ENCODE measurements at regions of chr12 and their contacts with region 1.

Region 1: GRCh38 chr12:98424726-98425401 is 90.5 kb upstream of the TMPO start:
- DNase-seq: peak; percentile 35
- ATAC-seq: peak; percentile 90
- H3K4me3 ChIP-seq: no peak overlapping the region
- H3K27ac ChIP-seq: no peak overlapping the region
- H3K4me1 ChIP-seq: peaks cover 6% of the 10 kb centered on the region; the same call in 1 of the 2 replicates
- H3K27me3 ChIP-seq: no peaks in the 10 kb centered on the region
- CTCF ChIP-seq: peak; percentile 86

Region 2: GRCh38 chr12:98516184-98516873 is 91.5 kb after region 1 on chr12:
- CTCF ChIA-PET with region 1: interaction called, 8 read pairs
- POLR2A ChIA-PET with region 1: no interaction called
- in situ Hi-C with region 1: no loop called
- intact Hi-C with region 1: loop called (anchors 1 kb)
- DNase-seq: peak; percentile 55
- ATAC-seq: peak; percentile 72
- H3K4me3 ChIP-seq: peak overlapping the region; percentile 81 to 99
- H3K27ac ChIP-seq: peak overlapping the region; percentile 98
- H3K4me1 ChIP-seq: peaks cover 27% of the 10 kb centered on the region
- H3K27me3 ChIP-seq: no peaks in the 10 kb centered on the region
- CTCF ChIP-seq: peak; percentile 89

Region 3: GRCh38 chr12:98532681-98533304 is 107.9 kb after region 1 on chr12:
- CTCF ChIA-PET with region 1: no interaction called
- POLR2A ChIA-PET with region 1: interaction called, 16 read pairs
- in situ Hi-C with region 1: no loop called
- intact Hi-C with region 1: loop called (anchors 5 kb)
- DNase-seq: no peak
- ATAC-seq: peak; percentile 90
- H3K4me3 ChIP-seq: no peak overlapping the region
- H3K27ac ChIP-seq: no peak overlapping the region; the same call in 1 of the 2 replicates
- H3K4me1 ChIP-seq: no peaks in the 10 kb centered on the region
- H3K27me3 ChIP-seq: no peaks in the 10 kb centered on the region
- CTCF ChIP-seq: peak; percentile 82

Region 4: DNA sequence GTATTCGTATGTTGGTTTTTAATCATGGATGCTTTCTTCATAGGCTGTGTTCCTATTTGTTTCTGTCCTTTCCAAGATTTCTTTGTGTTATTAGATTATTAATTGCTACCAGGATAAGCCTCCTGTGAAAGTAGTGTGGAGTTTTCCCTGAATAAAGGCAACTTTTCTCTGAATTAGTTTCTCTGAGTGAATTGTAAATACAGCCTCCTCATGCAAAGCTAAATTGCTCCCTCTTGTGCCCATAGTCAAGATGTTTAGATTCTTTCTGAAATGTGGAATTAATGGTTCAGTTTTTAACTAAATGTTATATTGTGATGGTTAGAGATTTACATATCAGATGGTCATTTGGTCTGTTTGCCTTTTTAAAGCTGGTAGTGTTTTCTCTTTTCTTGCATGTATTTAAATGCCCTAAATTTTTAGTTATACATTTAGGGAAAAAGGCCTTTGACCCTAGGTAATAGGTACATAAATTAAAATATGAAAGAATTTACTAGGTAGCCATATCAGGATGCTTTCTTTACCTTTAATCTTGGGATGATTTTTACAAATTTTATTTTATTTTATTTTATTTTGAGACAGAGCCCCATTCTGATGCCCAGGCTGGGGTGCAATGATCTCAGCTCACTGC is 229.1 kb after region 1 on chr12:
- CTCF ChIA-PET with region 1: no interaction called
- POLR2A ChIA-PET with region 1: no interaction called
- in situ Hi-C with region 1: no loop called
- intact Hi-C with region 1: loop called (anchors 10 kb)
- DNase-seq: no peak
- ATAC-seq: peak; percentile 69
- H3K4me3 ChIP-seq: no peak overlapping the region
- H3K27ac ChIP-seq: no peak overlapping the region
- H3K4me1 ChIP-seq: no peaks in the 10 kb centered on the region
- H3K27me3 ChIP-seq: no peaks in the 10 kb centered on the region
- CTCF ChIP-seq: peak; percentile 63; the same call in 1 of the 2 replicates